Vagina (tissue), 2 donors: ENCODE measurements at regions of chr9 and their contacts with region 1.

Region 1: GRCh38 chr9:107455425-107456135 is 34.0 kb downstream of the KLF4 start:
- DNase-seq: no peak
- H3K4me3 ChIP-seq: no peak overlapping the region
- H3K27ac ChIP-seq: no peak overlapping the region
- H3K4me1 ChIP-seq: no peaks in the 10 kb centered on the region
- H3K27me3 ChIP-seq: no peaks in the 10 kb centered on the region
- CTCF ChIP-seq: no peak
- POLR2A ChIP-seq: no peak

Region 2: GRCh38 chr9:107438211-107439090 is 17.1 kb before region 1 on chr9:
- intact Hi-C with region 1: loop called (anchors 1 kb)
- DNase-seq: no peak
- H3K4me3 ChIP-seq: no peak overlapping the region
- H3K27ac ChIP-seq: no peak overlapping the region
- H3K4me1 ChIP-seq: no peaks in the 10 kb centered on the region
- H3K27me3 ChIP-seq: no peaks in the 10 kb centered on the region
- CTCF ChIP-seq: no peak
- POLR2A ChIP-seq: no peak